Thyroid gland (tissue), 4 donors: ENCODE measurements at regions of chr9 and their contacts with region 1.

Region 1: DNA sequence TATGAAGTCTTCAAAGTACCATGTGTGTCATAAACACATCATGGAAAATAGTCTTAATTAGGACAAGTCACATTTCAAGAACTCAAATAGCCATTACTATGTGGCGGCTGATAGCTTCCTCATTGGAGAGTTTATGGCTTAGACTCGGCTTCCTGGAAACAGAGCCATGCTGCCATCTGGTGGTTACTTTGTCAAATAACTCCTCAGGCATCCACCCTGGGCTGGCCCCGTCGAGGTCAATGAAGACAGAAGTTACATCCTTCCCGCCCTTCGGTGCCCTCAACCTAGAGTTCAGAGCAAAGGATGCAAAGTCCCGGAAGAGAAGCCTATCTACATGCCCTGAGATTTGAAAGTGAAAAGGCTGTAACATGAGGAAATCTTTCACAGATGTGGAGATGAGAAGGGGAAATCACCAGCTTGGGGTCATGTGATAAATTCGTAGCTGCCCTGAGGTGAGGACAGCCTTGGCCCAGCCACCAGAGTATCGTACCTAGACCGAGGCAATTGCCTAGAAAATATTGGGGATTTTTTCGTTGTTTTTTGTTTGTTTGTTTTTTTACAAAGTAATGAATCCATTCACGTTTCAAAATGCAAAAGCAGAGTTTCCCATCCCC is 45.5 kb upstream of the ZNF169 start:
- DNase-seq: peak; percentile 66 to 68
- H3K4me3 ChIP-seq: no peak overlapping the region
- H3K27ac ChIP-seq: no peak overlapping the region
- H3K4me1 ChIP-seq: no peaks in the 10 kb centered on the region
- H3K27me3 ChIP-seq: no peaks in the 10 kb centered on the region
- CTCF ChIP-seq: peak; percentile 54 to 91 (median 80)
- POLR2A ChIP-seq: no peak

Region 2: GRCh38 chr9:94065535-94065961 is 148.1 kb before region 1 on chr9:
- intact Hi-C with region 1: loop called (anchors 1 kb)
- DNase-seq: peak; percentile 84 to 90
- H3K4me3 ChIP-seq: no peak overlapping the region
- H3K27ac ChIP-seq: peak overlapping the region; percentile 2 to 40 (median 14)
- H3K4me1 ChIP-seq: peaks cover 0 to 9% of the 10 kb centered on the region in 2 donors
- H3K27me3 ChIP-seq: no peaks in the 10 kb centered on the region
- CTCF ChIP-seq: peak; percentile 66 to 92 (median 84)
- POLR2A ChIP-seq: no peak

Region 3: DNA sequence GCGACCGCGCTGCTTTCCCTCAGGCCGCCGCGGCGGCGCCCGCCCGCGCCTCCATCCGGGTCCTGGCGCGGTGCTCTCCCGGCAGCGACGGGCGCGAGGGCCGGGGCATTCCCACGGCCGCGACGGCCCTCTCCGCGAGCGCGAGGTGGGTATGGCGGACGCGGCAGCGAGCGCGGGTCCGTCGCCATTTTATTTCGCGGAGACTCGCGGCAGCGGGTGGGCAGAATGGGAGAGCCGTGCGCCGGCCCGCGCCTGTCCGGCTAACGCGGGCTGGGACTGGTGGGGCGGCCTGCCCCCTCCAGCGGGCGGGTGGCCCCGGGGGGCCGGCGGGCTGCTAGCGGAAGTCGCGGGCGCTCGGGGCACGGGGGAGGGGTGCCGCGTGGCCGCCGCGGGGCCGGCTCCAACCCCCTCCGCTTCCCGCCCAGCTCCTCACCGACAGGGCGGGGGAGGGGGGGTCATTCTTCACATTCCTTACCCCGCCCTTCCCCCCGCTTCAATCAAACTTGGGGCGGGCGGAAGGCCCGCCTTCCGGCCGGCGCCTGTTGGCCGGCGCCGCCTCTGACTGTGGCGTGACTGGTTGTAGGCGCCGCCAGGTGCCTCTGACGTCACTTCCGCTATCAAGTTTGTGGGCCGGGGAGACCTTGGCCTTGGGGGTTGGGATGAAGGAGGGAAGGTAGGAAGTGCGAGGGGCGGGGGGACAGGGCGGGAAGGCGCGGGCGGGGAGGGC is 47.2 kb before region 1 on chr9:
- intact Hi-C with region 1: no loop called
- DNase-seq: peak; percentile 99
- H3K4me3 ChIP-seq: peak overlapping the region; percentile 84 to 98 (median 91)
- H3K27ac ChIP-seq: peak overlapping the region; percentile 99 to 100 (median 100)
- H3K4me1 ChIP-seq: peaks cover 25 to 31% of the 10 kb centered on the region in 2 donors
- H3K27me3 ChIP-seq: no peaks in the 10 kb centered on the region
- CTCF ChIP-seq: peak in 3 of 6 experiments; percentile 33 to 43 (median 37)
- POLR2A ChIP-seq: peak; percentile 99

Region 4: GRCh38 chr9:95031711-95032461 is 818.3 kb after region 1 on chr9:
- intact Hi-C with region 1: no loop called
- DNase-seq: peak; percentile 84 to 85
- H3K4me3 ChIP-seq: no peak overlapping the region
- H3K27ac ChIP-seq: peak overlapping the region; percentile 41 to 58 (median 42)
- H3K4me1 ChIP-seq: peaks cover 57 to 71% of the 10 kb centered on the region in 2 donors
- H3K27me3 ChIP-seq: no peaks in the 10 kb centered on the region
- CTCF ChIP-seq: no peak
- POLR2A ChIP-seq: no peak